ENCODE measurements at regions of chr2 and their contacts with region 1.

Region 1: DNA sequence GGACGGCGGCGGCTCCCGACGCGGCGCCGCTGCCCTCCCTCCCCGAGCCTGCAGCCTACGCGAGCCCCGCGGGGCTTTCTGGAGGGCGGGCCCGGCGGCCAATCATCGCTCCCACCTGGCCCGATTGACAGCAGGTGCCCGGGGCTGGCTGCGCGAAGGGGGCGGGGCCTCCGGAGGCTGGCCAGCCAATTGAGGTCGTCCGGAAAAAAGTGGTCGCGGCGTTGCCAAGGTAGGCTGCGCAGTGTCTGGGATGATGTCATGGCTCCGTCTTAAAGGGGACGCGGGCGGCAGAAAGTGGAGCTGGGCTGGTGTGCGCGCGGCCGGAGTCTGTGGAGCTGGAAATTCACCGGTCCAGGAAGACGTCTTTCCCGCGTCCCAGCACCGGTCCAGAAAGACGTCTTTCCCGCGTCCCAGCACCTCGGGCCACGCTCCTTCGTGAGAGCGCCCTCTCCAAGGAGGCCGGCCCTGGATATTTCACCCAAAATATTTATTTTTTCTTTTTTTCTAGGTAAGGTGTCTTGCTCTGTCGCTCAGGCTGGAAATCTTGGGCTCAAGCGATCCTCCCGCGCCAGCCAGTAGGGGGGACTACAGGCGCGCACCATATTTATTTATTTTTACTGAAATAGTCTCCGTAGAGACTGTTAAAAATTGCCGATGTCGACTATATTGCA is at the start of gene ACTR1B:
- DNase-seq: peak; percentile 98
- H3K4me3 ChIP-seq: peak within 1 kb of the TSS; percentile 71 to 82 (median 78)
- H3K27ac ChIP-seq: peak within 1 kb of the TSS; percentile 90 to 100 (median 97)
- H3K4me1 ChIP-seq: peaks cover 11 to 33% (median 22%) of the 10 kb centered on the region in 4 donors
- H3K27me3 ChIP-seq: no peaks in the 10 kb centered on the region
- CTCF ChIP-seq: peak; percentile 60 to 86 (median 66)
- EP300 ChIP-seq: no peak
- POLR2A ChIP-seq: peak; percentile 93
- total RNA-seq, gene ACTR1B: 66.8 to 157 (median 119) TPM

Region 2: DNA sequence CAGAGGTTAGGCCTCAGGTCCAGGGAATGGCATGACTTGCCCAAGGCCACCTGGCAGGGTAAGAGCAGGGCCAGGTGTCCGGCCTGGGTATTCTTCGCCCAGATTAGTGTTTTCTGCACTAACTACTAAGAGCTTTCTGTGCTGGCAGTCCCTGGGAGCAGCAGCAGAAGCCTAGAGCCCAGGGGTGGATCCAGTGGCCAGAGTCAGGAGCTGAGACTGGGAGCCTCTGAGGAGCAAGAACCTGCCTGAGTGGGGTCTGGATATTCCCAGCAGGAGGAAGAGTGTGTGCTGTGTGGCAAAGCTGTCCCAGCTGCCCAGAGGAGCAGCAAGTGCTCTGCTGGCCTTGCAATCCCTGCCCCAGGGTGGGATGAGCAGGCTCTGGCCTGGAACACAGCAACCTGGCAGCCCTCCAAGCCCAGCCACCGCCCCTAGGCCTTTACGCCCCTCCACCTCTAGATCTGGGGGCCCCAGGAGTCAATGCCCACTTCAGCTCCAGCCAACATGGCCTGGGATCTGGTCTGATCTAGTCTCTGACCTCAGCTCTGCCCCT is 1598.6 kb before region 1 on chr2:
- in situ Hi-C with region 1: loop called in 1 of 4 experiments (anchors 25 kb)
- intact Hi-C with region 1: no loop called
- DNase-seq: no peak
- H3K4me3 ChIP-seq: no peak overlapping the region
- H3K27ac ChIP-seq: no peak overlapping the region
- H3K4me1 ChIP-seq: no peaks in the 10 kb centered on the region
- H3K27me3 ChIP-seq: no peaks in the 10 kb centered on the region
- CTCF ChIP-seq: no peak
- EP300 ChIP-seq: no peak
- POLR2A ChIP-seq: no peak

Region 3: GRCh38 chr2:97617911-97618310 is 46.2 kb before region 1 on chr2:
- in situ Hi-C with region 1: no loop called
- intact Hi-C with region 1: no loop called
- DNase-seq: no peak
- H3K4me3 ChIP-seq: no peak overlapping the region
- H3K27ac ChIP-seq: no peak overlapping the region
- H3K4me1 ChIP-seq: no peaks in the 10 kb centered on the region
- H3K27me3 ChIP-seq: no peaks in the 10 kb centered on the region
- CTCF ChIP-seq: no peak
- EP300 ChIP-seq: no peak
- POLR2A ChIP-seq: no peak

Measured in transverse colon (tissue), 4 donors.